PC-9 (cell line): ENCODE measurements at regions of chr1 and their contacts with region 1.

Region 1: GRCh38 chr1:29033829-29034466 is 89.8 kb downstream of the TMEM200B start:
- DNase-seq: peak in 1 of 2 experiments; percentile 40
- H3K4me3 ChIP-seq: no peak overlapping the region
- H3K27ac ChIP-seq: no peak overlapping the region
- H3K4me1 ChIP-seq: no peaks in the 10 kb centered on the region
- H3K27me3 ChIP-seq: no peaks in the 10 kb centered on the region
- CTCF ChIP-seq: peak; percentile 72

Region 2: GRCh38 chr1:29017235-29017634 is 16.7 kb before region 1 on chr1:
- CTCF ChIA-PET with region 1: no interaction called
- POLR2A ChIA-PET with region 1: interaction called, 35 read pairs
- intact Hi-C with region 1: no loop called
- DNase-seq: no peak
- H3K4me3 ChIP-seq: no peak overlapping the region
- H3K27ac ChIP-seq: no peak overlapping the region
- H3K4me1 ChIP-seq: no peaks in the 10 kb centered on the region
- H3K27me3 ChIP-seq: no peaks in the 10 kb centered on the region
- CTCF ChIP-seq: no peak

Region 3: GRCh38 chr1:29202584-29203340 is 168.8 kb after region 1 on chr1:
- CTCF ChIA-PET with region 1: no interaction called
- POLR2A ChIA-PET with region 1: no interaction called
- intact Hi-C with region 1: loop called (anchors 2 kb)
- DNase-seq: peak; percentile 89 to 90
- H3K4me3 ChIP-seq: peak overlapping the region; percentile 23; the same call in 1 of the 2 replicates
- H3K27ac ChIP-seq: peak overlapping the region; percentile 63
- H3K4me1 ChIP-seq: peaks cover 9% of the 10 kb centered on the region
- H3K27me3 ChIP-seq: no peaks in the 10 kb centered on the region
- CTCF ChIP-seq: peak; percentile 87